ENCODE measurements at regions of chr7 and their contacts with region 1.

Region 1: DNA sequence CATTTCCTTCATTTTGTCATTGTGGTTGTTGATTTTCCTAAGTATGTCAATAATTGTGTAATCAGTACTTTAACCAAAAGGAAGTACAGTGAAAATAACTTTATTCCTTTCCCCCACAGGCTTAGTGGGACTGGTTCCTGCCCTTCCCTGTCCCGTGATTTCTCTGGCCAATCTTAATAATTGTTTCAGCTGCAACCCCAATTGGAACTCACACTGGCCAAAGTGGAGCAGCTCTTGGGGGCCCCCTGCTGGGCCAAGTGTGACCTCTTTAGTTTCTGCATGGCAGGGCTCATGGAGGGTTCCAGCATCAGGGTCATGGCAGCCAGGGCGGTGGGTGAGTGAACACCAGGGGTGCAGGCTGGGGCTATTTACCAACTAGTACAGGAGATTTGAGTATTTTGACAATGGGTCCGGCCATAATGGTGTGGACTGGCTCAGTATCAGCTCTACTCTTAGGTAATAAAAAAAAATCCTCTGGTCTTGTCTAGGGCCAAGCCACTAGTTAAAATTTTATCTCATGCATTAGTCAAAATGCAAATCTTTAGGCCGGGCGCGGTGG is 31.7 kb downstream of the CYCS start:
- DNase-seq: peak; percentile 91
- ATAC-seq: peak; percentile 90
- H3K4me3 Mint-ChIP-seq: no peak overlapping the region
- H3K27ac Mint-ChIP-seq: no peak overlapping the region
- H3K4me1 Mint-ChIP-seq: peaks cover 13% of the 10 kb centered on the region
- H3K27me3 Mint-ChIP-seq: peaks cover 2% of the 10 kb centered on the region
- CTCF ChIP-seq: peak; percentile 83

Region 2: DNA sequence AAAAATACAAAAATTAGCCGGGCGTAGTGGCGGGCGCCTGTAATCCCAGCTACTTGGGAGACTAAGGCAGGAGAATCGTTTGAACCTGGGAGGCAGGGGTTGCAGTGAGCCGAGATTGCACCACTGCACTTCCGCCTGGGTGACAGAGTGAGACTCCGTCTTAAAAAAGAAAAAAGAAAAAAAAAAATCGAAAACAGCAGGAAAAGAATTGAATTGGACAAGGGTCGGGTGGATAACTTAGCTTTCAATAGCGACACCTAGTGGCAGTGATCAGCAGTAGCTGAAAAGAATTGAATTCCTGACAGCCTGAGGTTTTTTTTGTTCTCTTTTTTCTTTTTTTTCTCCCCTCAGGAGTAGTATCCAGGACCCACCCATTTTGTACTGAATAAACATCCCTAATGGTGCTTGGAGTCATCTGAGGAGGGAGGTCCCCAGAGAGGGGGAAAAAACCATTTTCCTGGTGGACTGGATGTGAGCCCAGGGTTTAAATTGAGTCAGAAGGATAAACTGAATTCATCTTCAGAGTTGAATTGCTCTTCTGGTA is 23.4 kb before region 1 on chr7:
- CTCF ChIA-PET with region 1: interaction called, 25 read pairs
- POLR2A ChIA-PET with region 1: interaction called, 4 read pairs
- intact Hi-C with region 1: no loop called
- DNase-seq: peak; percentile 54
- ATAC-seq: peak; percentile 71
- H3K4me3 Mint-ChIP-seq: no peak overlapping the region
- H3K27ac Mint-ChIP-seq: no peak overlapping the region
- H3K4me1 Mint-ChIP-seq: peaks cover 9% of the 10 kb centered on the region
- H3K27me3 Mint-ChIP-seq: peaks cover 2% of the 10 kb centered on the region
- CTCF ChIP-seq: peak; percentile 96

Region 3: GRCh38 chr7:25075459-25075858 is 17.9 kb before region 1 on chr7:
- CTCF ChIA-PET with region 1: interaction called, 25 read pairs
- POLR2A ChIA-PET with region 1: interaction called, 4 read pairs
- intact Hi-C with region 1: no loop called
- DNase-seq: peak; percentile 56
- ATAC-seq: peak; percentile 71
- H3K4me3 Mint-ChIP-seq: no peak overlapping the region
- H3K27ac Mint-ChIP-seq: no peak overlapping the region
- H3K4me1 Mint-ChIP-seq: peaks cover 14% of the 10 kb centered on the region
- H3K27me3 Mint-ChIP-seq: peaks cover 9% of the 10 kb centered on the region
- CTCF ChIP-seq: no peak

Region 4: GRCh38 chr7:25103773-25104172 is 10.4 kb after region 1 on chr7:
- CTCF ChIA-PET with region 1: interaction called, 24 read pairs
- POLR2A ChIA-PET with region 1: interaction called, 4 read pairs
- intact Hi-C with region 1: no loop called
- DNase-seq: no peak
- ATAC-seq: no peak
- H3K4me3 Mint-ChIP-seq: no peak overlapping the region
- H3K27ac Mint-ChIP-seq: no peak overlapping the region
- H3K4me1 Mint-ChIP-seq: no peaks in the 10 kb centered on the region
- H3K27me3 Mint-ChIP-seq: peaks cover 1% of the 10 kb centered on the region
- CTCF ChIP-seq: no peak

Region 5: GRCh38 chr7:25125137-25125946 is 32.0 kb after region 1 on chr7 and contains the start of gene CYCS:
- CTCF ChIA-PET with region 1: interaction called, 41 read pairs
- POLR2A ChIA-PET with region 1: interaction called, 3 read pairs
- intact Hi-C with region 1: no loop called
- DNase-seq: peak; percentile 100
- ATAC-seq: peak; percentile 95
- H3K4me3 Mint-ChIP-seq: peak within 1 kb of the TSS; percentile 97
- H3K27ac Mint-ChIP-seq: peak within 1 kb of the TSS; percentile 98
- H3K4me1 Mint-ChIP-seq: peaks cover 27% of the 10 kb centered on the region
- H3K27me3 Mint-ChIP-seq: no peaks in the 10 kb centered on the region
- CTCF ChIP-seq: no peak
- total RNA-seq, gene CYCS: 266 TPM

Region 6: DNA sequence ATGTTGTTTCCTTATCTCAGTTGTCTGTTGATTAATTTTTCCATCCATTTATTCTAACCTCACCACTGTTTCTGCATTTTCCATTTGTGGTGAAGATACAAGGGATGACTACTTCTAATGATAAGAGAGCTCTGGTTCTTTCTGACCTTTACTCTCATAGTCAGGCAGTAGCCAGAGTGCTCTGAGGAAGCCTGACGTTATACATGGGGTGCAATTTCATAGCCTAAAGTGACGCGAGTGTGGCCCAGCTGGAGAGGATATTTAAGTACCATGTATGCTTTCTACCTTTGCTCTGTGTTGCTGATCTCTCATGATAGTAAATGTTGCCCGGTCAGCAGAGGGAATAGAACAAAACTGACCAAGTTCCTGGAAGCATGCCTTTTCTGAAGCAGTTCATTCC is 65.6 kb after region 1 on chr7:
- CTCF ChIA-PET with region 1: interaction called, 12 read pairs
- POLR2A ChIA-PET with region 1: no interaction called
- intact Hi-C with region 1: no loop called
- DNase-seq: no peak
- ATAC-seq: no peak
- H3K4me3 Mint-ChIP-seq: no peak overlapping the region
- H3K27ac Mint-ChIP-seq: no peak overlapping the region
- H3K4me1 Mint-ChIP-seq: peaks cover 5% of the 10 kb centered on the region
- H3K27me3 Mint-ChIP-seq: no peaks in the 10 kb centered on the region
- CTCF ChIP-seq: no peak

Region 7: DNA sequence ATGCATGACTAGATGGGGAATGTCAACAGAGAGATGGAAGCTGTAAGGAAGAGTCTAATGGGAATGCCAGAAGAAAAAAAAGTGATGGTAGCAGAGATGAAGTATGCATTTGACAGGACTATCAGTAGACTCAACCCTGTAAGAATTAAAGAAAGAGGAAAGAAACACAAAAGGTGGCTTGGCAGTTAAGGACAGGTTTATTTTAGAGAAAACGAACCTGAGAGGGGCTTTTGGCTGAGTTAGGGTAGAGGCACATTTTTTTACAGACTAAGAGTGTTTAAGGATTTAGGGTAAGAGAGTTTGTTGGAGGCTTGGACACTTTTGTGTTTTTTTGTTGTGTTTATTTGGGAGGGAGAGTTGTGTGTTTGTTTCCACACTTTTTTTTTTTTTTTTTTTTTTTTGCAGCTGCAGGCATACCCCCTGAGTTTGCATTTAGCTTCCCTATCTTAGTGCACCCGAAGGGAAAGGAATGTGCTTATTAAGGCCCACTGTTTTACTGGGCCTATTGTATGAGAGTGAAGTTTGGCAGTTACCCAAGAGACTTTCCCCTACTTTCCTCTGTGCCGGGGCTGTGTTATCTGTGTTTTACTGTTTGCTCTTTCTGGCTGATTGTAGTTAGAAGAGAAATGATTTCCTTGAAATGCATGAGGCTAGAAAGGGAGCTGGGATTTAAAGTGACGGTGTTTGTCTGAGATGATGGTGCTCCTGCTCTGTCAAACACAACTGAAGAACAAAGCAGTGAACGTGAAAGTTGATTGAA is 103.0 kb after region 1 on chr7:
- CTCF ChIA-PET with region 1: no interaction called
- POLR2A ChIA-PET with region 1: no interaction called
- intact Hi-C with region 1: no loop called
- DNase-seq: no peak
- ATAC-seq: no peak
- H3K4me3 Mint-ChIP-seq: no peak overlapping the region
- H3K27ac Mint-ChIP-seq: no peak overlapping the region
- H3K4me1 Mint-ChIP-seq: no peaks in the 10 kb centered on the region
- H3K27me3 Mint-ChIP-seq: no peaks in the 10 kb centered on the region
- CTCF ChIP-seq: no peak

Region 8: DNA sequence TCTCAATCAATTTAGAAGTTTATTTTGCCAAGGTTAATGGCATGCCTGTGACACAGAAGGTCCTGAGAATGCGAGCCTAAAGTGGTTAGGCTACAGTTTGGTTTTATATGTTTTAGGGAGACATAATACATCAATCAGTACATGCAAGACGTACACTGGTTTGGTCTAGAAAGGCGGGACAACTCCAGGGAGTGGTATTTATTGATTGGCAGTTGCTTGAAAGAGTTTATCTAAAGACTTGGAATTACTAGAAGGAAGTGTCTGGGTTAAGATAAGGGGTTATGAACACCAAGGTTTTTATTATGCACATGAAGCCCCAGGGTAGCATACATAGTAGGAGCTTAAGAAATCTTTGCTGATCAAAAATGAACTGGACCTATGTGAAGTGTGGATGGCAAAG is 113.4 kb after region 1 on chr7:
- CTCF ChIA-PET with region 1: no interaction called
- POLR2A ChIA-PET with region 1: no interaction called
- intact Hi-C with region 1: no loop called
- DNase-seq: no peak
- ATAC-seq: no peak
- H3K4me3 Mint-ChIP-seq: no peak overlapping the region
- H3K27ac Mint-ChIP-seq: no peak overlapping the region
- H3K4me1 Mint-ChIP-seq: no peaks in the 10 kb centered on the region
- H3K27me3 Mint-ChIP-seq: peaks cover 23% of the 10 kb centered on the region
- CTCF ChIP-seq: no peak

Region 9: DNA sequence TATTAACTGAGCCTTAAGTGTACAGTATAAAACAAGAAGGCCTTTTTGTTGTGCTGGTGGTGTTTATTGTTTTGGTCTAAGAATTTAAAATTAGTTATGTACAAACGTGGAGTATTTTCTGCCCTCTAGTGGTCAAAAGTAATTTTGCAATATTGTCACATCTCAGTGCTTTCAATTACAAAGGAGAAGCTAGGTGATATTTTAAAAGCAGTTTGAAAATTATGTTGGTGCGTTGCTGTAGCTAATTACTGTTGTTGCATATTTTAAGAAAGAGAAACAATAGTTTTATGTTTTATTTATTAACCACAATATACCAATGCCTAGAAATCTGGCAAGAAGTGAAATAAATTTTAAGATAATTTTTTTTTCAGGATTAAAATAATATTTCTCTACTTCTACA is 123.5 kb after region 1 on chr7:
- CTCF ChIA-PET with region 1: interaction called, 10 read pairs
- POLR2A ChIA-PET with region 1: no interaction called
- intact Hi-C with region 1: no loop called
- DNase-seq: no peak
- ATAC-seq: no peak
- H3K4me3 Mint-ChIP-seq: no peak overlapping the region
- H3K27ac Mint-ChIP-seq: no peak overlapping the region
- H3K4me1 Mint-ChIP-seq: no peaks in the 10 kb centered on the region
- H3K27me3 Mint-ChIP-seq: peaks cover 21% of the 10 kb centered on the region
- CTCF ChIP-seq: peak; percentile 79

Region 10: DNA sequence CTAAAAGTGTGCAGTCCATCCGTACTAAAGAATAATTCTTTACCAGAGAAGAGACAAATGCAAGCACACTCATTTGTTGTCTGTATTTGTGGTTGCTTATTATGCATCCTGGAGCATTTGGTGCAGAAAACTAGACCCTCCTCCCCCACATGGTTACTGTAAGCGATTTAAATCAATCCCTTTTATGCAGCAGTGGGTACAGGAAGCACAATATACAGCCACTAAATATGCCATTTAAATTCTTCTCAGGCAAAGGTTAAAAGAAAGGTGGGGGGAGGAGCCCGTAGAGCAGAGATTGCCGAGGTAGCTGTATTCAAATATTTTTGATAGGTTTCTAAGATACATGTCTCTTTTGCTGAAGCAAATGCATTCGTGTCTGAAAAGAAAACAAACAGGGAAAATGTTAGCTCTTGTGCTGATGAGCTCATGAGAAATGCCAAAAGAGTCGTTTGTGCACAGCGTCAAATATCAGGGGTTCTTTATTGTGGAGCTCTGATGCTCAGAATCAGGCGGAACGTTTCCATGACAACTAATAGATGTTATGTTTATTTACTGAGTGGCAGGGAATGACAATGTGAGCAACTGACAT is 266.2 kb after region 1 on chr7:
- CTCF ChIA-PET with region 1: no interaction called
- POLR2A ChIA-PET with region 1: no interaction called
- intact Hi-C with region 1: no loop called
- DNase-seq: no peak
- ATAC-seq: no peak
- H3K4me3 Mint-ChIP-seq: no peak overlapping the region
- H3K27ac Mint-ChIP-seq: no peak overlapping the region
- H3K4me1 Mint-ChIP-seq: no peaks in the 10 kb centered on the region
- H3K27me3 Mint-ChIP-seq: peaks cover 3% of the 10 kb centered on the region
- CTCF ChIP-seq: no peak